CD8-positive, alpha-beta memory T cell (primary cell): ENCODE measurements at regions of chr13 and their contacts with region 1.

Region 1: GRCh38 chr13:45367358-45367757 is 26.4 kb upstream of the TPT1 start:
- DNase-seq: peak; percentile 79 to 96 (median 83)
- H3K4me3 ChIP-seq: no peak overlapping the region
- H3K4me3 Mint-ChIP-seq: peak overlapping the region; percentile 1 to 74 (median 69)
- H3K27ac ChIP-seq: peak overlapping the region; percentile 52
- H3K27ac Mint-ChIP-seq: peak overlapping the region; percentile 52 to 96 (median 91)
- H3K4me1 ChIP-seq: peaks cover 30% of the 10 kb centered on the region
- H3K4me1 Mint-ChIP-seq: peaks cover 35 to 64% (median 61%) of the 10 kb centered on the region in 3 donors
- H3K27me3 ChIP-seq: no peaks in the 10 kb centered on the region
- H3K27me3 Mint-ChIP-seq: no peaks in the 10 kb centered on the region

Region 2: DNA sequence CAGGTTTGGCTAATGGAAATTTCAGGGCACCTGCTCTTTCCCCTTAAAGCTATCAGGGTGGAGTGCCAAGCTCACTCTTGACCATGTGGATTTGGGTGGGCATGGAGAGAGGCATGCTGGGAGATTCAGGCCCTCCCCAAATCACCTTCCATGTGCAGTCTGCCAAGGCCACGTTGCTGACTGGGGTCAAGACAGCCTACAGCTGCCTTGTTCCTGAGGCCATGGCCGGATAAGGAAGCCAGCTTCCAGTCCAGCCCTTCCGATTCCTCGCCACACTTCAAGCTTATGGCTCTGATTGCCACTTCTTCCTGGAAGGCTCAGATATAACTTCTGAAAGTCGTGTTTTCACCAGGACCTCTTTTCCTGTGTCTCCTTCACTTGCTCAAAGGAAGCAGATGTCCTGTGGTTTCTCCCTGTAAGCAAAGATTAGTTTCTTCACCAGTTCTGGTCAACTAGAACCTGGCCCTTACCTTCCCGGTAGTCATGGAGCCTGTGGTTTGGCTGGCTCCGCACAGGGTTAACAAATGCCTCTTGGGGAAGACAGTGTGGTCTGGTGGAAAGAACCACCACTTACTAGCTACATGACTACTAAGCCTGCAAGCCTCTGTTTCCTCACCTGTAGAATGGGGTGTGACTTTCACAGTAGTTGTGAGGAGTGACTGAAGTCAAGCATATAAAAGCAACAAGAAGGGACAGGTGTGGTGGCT is 10.2 kb before region 1 on chr13:
- CTCF ChIA-PET with region 1: interaction called, 16 read pairs
- POLR2A ChIA-PET with region 1: no interaction called
- DNase-seq: peak in 1 of 5 donors; percentile 35
- H3K4me3 ChIP-seq: no peak overlapping the region
- H3K4me3 Mint-ChIP-seq: peak overlapping the region in 1 of 7 donors; percentile 36
- H3K27ac ChIP-seq: no peak overlapping the region
- H3K27ac Mint-ChIP-seq: peak overlapping the region; percentile 43 to 79 (median 60)
- H3K4me1 ChIP-seq: no peaks in the 10 kb centered on the region
- H3K4me1 Mint-ChIP-seq: peaks cover 9 to 21% (median 21%) of the 10 kb centered on the region in 3 donors
- H3K27me3 ChIP-seq: no peaks in the 10 kb centered on the region
- H3K27me3 Mint-ChIP-seq: no peaks in the 10 kb centered on the region

Region 3: GRCh38 chr13:45393941-45394570 is 26.7 kb after region 1 on chr13:
- CTCF ChIA-PET with region 1: interaction called, 25 read pairs
- POLR2A ChIA-PET with region 1: interaction called, 3 read pairs
- DNase-seq: peak in 1 of 5 donors; percentile 15
- H3K4me3 ChIP-seq: no peak overlapping the region
- H3K4me3 Mint-ChIP-seq: no peak overlapping the region
- H3K27ac ChIP-seq: no peak overlapping the region
- H3K27ac Mint-ChIP-seq: peak overlapping the region in 4 of 8 donors; percentile 33 to 68 (median 48)
- H3K4me1 ChIP-seq: peaks cover 30% of the 10 kb centered on the region
- H3K4me1 Mint-ChIP-seq: peaks cover 39 to 48% (median 47%) of the 10 kb centered on the region in 3 donors
- H3K27me3 ChIP-seq: no peaks in the 10 kb centered on the region
- H3K27me3 Mint-ChIP-seq: no peaks in the 10 kb centered on the region

Region 4: GRCh38 chr13:45417790-45418534 is 50.6 kb after region 1 on chr13 and contains the start of gene SLC25A30:
- CTCF ChIA-PET with region 1: interaction called, 6 read pairs
- POLR2A ChIA-PET with region 1: interaction called, 28 read pairs
- DNase-seq: peak; percentile 89 to 95 (median 92)
- H3K4me3 ChIP-seq: peak within 1 kb of the TSS; percentile 96
- H3K4me3 Mint-ChIP-seq: peak within 1 kb of the TSS; percentile 86 to 99 (median 97)
- H3K27ac ChIP-seq: peak within 1 kb of the TSS; percentile 62
- H3K27ac Mint-ChIP-seq: peak within 1 kb of the TSS; percentile 91 to 99 (median 96)
- H3K4me1 ChIP-seq: peaks cover 31% of the 10 kb centered on the region
- H3K4me1 Mint-ChIP-seq: peaks cover 21 to 38% (median 32%) of the 10 kb centered on the region in 3 donors
- H3K27me3 ChIP-seq: no peaks in the 10 kb centered on the region
- H3K27me3 Mint-ChIP-seq: peaks cover 0 to 3% of the 10 kb centered on the region in 2 donors
- total RNA-seq, gene SLC25A30: 27.2 to 29.8 TPM